ENCODE measurements at regions of chr14 and their contacts with region 1.

Region 1: DNA sequence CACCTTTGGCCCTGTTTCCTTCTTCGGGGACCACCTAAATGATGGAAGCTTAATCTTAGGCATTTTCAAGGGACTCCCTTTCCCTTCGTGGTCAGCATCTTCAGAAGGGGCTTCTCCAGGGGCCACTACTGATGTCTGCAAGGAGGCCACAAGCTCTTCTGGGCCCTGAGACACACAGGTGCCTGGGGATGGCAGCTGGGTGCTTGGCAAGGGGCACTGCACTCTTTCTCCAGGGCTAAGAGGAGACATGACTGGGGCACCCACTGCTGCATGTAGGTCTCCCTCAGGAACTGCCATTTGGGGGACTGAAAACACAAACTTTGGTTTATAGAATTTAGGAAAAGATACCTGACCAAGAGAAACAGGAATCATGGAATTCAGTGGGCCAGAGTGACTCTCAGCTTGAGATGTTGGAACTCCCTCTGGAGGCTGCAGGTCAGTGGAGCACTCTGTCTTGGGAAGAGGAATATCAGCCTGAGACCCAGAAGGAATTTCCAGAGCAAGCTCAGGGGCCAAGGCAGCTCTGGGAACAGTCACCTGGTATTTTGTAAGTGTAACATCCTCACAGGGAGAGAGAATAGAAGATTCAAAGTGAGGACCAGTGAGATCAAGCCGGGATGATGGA is 16.0 kb downstream of the PLD4 start:
- DNase-seq: no peak
- ATAC-seq: no peak
- H3K4me3 ChIP-seq: no peak overlapping the region
- H3K27ac ChIP-seq: no peak overlapping the region
- H3K4me1 ChIP-seq: no peaks in the 10 kb centered on the region; a peak in 1 of 5 replicates
- H3K27me3 ChIP-seq: peaks cover 5 to 53% of the 10 kb centered on the region in 2 experiments; a peak in 4 of 5 replicates
- CTCF ChIP-seq: peak; percentile 13 to 52 (median 21); a peak in 2 of 6 replicates
- EP300 ChIP-seq: no peak
- POLR2A ChIP-seq: no peak
- RAD21 ChIP-seq: peak in 1 of 2 experiments; percentile 6; a peak in 1 of 4 replicates

Region 2: GRCh38 chr14:104885031-104885972 is 55.3 kb before region 1 on chr14:
- CTCF ChIA-PET with region 1: no interaction called
- POLR2A ChIA-PET with region 1: no interaction called
- in situ Hi-C with region 1: no loop called
- intact Hi-C with region 1: no loop called
- DNase-seq: no peak
- ATAC-seq: no peak
- H3K4me3 ChIP-seq: no peak overlapping the region
- H3K27ac ChIP-seq: no peak overlapping the region
- H3K4me1 ChIP-seq: peaks cover 0 to 51% of the 10 kb centered on the region in 2 experiments; a peak in 2 of 5 replicates
- H3K27me3 ChIP-seq: no peaks in the 10 kb centered on the region
- CTCF ChIP-seq: no peak
- EP300 ChIP-seq: no peak
- POLR2A ChIP-seq: no peak
- RAD21 ChIP-seq: no peak

Region 3: DNA sequence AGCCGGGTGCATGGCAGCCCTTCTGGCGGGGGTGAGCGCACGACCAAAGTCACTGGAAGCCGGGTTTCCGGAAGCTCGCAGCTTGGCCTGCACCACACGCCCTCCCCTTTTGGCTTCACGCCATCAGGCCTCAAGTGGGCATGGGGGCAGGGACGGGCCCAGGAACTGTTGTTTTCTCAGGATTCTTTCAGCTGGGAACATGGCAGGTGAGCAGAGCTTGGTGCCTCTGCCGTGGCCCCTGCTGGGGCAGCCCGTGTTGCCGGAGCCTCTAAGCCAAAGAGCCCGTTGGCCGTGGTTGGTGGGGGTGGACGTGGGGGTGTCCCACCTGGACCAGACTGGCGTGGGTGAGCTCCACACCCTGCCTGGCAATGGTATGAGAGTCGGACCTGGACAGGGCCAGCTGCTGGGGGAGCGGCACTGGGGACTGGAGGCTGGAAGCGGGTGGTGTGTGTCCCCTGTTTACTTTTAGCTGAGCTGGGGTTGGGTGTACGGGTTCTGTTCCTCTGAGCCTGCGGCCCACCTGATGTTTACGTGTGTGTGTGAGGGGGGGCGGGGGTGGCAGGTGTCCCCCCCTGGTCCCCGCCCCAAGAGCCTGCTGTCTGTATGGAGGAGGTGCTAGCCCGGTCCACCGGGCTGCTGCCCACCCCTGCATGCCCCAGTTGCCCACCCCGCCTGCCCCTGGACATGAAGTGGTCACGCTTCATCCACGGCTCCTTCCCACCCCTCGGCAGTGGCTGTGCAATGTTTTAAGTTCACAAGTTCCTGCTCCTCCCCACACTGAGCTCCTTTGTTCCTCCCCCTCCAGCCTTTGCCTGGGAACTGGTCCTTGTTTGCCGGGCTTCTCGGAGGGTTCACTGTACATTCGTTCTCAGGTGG is 44.6 kb before region 1 on chr14:
- CTCF ChIA-PET with region 1: no interaction called
- POLR2A ChIA-PET with region 1: no interaction called
- in situ Hi-C with region 1: no loop called
- intact Hi-C with region 1: loop called (anchors 1 kb)
- DNase-seq: no peak
- ATAC-seq: no peak
- H3K4me3 ChIP-seq: no peak overlapping the region
- H3K27ac ChIP-seq: no peak overlapping the region
- H3K4me1 ChIP-seq: peaks cover 0 to 64% of the 10 kb centered on the region in 2 experiments; a peak in 2 of 5 replicates
- H3K27me3 ChIP-seq: peaks cover 0 to 6% of the 10 kb centered on the region in 2 experiments; a peak in 2 of 5 replicates
- CTCF ChIP-seq: no peak
- EP300 ChIP-seq: no peak
- POLR2A ChIP-seq: no peak
- RAD21 ChIP-seq: no peak

Region 4: GRCh38 chr14:105086833-105087307 is 146.2 kb after region 1 on chr14:
- CTCF ChIA-PET with region 1: no interaction called
- POLR2A ChIA-PET with region 1: no interaction called
- in situ Hi-C with region 1: no loop called
- intact Hi-C with region 1: no loop called
- DNase-seq: peak; percentile 74 to 85 (median 77)
- ATAC-seq: peak; percentile 95
- H3K4me3 ChIP-seq: peak overlapping the region; percentile 33
- H3K27ac ChIP-seq: no peak overlapping the region
- H3K4me1 ChIP-seq: peaks cover 3 to 50% of the 10 kb centered on the region in 2 experiments; a peak in 2 of 5 replicates
- H3K27me3 ChIP-seq: no peaks in the 10 kb centered on the region; a peak in 1 of 5 replicates
- CTCF ChIP-seq: peak; percentile 74 to 91 (median 83)
- EP300 ChIP-seq: no peak
- POLR2A ChIP-seq: 0 out of 2 replicates have a peak, but pooled peaks have one; percentile 34
- RAD21 ChIP-seq: peak; percentile 74 to 82